Activated T-helper 1 cell treated with anti-CD3 and anti-CD28 coated beads, Interleukin-12 subunit alpha, Interleukin-12 subunit beta, Interleukin-2, Interleukin-4 antibody, amounts not matched to agents 30 ng/mL and 10 ng/mL and 1 ng/mL, durations not matched to agents 14 hours and 24 hours and 36 hours (primary cell): ENCODE measurements at regions of chr6 and their contacts with region 1.

Region 1: DNA sequence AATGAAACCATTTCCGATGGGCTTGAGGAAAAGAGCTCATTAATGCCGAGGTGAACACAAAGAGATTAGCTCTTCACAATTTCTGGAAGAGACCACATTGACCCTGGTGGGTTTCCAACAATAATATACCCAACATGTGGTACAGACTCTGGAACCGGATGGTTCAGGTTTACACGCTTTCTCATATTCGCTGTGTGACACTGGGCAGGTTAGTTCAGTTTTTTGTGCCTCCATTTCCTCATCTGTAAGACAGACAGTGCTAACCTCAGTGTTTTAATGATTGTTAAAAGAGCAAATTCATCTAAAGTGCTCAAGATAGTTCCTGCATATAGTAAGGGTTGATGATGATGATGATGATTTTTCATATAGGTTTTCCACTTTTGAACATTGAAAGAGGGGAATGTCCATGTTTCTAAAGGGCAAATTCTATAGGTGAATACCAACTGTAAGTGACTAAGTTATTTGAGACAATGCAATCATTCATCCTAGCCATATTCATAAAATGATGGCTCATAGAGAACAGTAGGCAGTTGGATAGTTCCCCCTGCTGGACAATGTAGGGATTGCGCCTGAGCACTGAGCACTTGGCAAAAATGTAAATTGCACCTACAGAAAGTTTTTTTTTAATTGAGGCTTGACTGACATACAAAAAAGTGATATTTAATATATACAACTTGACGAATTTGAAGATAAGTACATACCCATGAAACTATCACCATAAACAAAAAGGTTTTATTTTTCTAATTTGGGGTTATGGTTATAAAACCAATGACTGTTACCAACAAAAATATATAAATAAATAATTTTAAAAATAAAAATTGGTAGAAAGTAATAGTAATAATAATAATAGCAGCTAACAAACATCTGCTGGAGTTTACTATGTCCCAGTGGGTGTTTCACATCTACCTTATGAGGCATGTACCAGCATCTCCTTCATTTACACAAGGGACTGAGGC is 2.1 kb upstream of the PERP start:
- DNase-seq: peak; percentile 67
- H3K4me3 Mint-ChIP-seq: peak overlapping the region; percentile 62
- H3K27ac Mint-ChIP-seq: no peak overlapping the region
- H3K4me1 Mint-ChIP-seq: peaks cover 29% of the 10 kb centered on the region
- H3K27me3 Mint-ChIP-seq: peaks cover 28% of the 10 kb centered on the region

Region 2: DNA sequence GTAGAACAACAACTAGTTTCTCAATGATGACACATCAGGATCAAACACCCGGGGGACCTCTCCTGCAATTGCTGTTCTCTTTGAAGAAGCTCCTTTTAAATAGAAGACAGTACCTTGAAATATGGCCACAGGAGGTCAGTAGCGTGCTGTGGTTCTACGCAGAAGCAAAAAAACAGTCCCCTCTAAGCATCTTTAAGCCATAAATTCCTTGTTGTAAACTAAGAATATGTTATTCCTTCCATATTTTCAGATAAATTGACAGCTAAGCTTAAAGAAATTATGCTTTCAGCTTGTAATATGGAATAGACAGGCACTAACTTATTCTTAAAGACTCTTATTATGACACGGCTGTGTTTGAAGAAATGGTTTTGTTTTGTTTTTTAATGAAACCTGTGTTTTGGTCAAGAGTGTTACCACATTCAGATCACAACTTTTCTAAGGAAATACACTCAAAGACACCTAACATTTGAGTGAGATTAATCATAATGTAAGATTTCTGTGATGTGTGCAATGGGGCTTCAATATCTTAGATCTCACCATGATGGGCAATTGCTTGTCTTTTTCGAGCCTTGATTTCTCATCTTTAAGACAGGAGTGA is 1014.8 kb before region 1 on chr6:
- intact Hi-C with region 1: loop called (anchors 2 kb)
- DNase-seq: peak; percentile 38
- H3K4me3 Mint-ChIP-seq: no peak overlapping the region
- H3K27ac Mint-ChIP-seq: no peak overlapping the region
- H3K4me1 Mint-ChIP-seq: peaks cover 57% of the 10 kb centered on the region
- H3K27me3 Mint-ChIP-seq: no peaks in the 10 kb centered on the region

Region 3: GRCh38 chr6:137313928-137314855 is 795.1 kb before region 1 on chr6:
- intact Hi-C with region 1: loop called (anchors 10 kb)
- DNase-seq: peak; percentile 32
- H3K4me3 Mint-ChIP-seq: no peak overlapping the region
- H3K27ac Mint-ChIP-seq: no peak overlapping the region
- H3K4me1 Mint-ChIP-seq: peaks cover 9% of the 10 kb centered on the region
- H3K27me3 Mint-ChIP-seq: peaks cover 15% of the 10 kb centered on the region

Region 4: GRCh38 chr6:137641474-137642077 is 467.7 kb before region 1 on chr6:
- intact Hi-C with region 1: loop called (anchors 1 kb)
- DNase-seq: peak; percentile 49
- H3K4me3 Mint-ChIP-seq: no peak overlapping the region
- H3K27ac Mint-ChIP-seq: no peak overlapping the region
- H3K4me1 Mint-ChIP-seq: peaks cover 21% of the 10 kb centered on the region
- H3K27me3 Mint-ChIP-seq: peaks cover 3% of the 10 kb centered on the region

Region 5: DNA sequence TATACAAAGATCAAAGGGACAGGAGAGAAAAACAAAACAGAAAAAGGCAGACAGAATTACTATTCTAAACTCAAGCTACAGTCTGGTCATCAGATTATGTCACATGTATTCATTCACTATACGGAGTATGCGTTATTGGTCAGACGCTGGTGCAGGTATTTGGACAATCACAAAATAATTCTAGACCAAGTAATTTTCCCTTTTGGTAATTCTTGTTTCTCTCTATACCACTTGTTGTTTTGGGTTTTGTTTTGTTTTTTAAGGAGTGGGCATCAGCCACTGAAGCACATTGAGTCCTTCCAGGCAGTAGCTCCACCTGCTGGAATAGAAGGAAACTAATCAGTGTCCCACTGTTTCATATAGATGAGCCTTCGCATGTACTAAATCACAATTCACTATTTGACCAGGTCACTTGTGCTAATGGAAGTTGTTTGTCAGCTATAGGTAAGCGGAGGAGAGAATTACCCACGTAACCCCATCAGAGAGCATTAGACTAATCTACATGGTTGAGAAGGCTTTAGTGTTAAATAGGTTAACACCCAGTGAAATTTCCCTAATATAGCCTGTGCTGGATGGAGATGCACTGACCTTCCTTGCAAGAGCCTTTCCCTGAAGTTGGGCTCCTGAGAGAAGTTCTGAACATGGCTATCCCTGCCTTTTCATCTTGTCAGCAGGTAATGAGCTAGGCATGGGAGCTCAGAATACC is 164.4 kb before region 1 on chr6:
- intact Hi-C with region 1: loop called (anchors 5 kb)
- DNase-seq: no peak
- H3K4me3 Mint-ChIP-seq: no peak overlapping the region
- H3K27ac Mint-ChIP-seq: peak overlapping the region; percentile 15
- H3K4me1 Mint-ChIP-seq: peaks cover 86% of the 10 kb centered on the region
- H3K27me3 Mint-ChIP-seq: no peaks in the 10 kb centered on the region

Region 6: DNA sequence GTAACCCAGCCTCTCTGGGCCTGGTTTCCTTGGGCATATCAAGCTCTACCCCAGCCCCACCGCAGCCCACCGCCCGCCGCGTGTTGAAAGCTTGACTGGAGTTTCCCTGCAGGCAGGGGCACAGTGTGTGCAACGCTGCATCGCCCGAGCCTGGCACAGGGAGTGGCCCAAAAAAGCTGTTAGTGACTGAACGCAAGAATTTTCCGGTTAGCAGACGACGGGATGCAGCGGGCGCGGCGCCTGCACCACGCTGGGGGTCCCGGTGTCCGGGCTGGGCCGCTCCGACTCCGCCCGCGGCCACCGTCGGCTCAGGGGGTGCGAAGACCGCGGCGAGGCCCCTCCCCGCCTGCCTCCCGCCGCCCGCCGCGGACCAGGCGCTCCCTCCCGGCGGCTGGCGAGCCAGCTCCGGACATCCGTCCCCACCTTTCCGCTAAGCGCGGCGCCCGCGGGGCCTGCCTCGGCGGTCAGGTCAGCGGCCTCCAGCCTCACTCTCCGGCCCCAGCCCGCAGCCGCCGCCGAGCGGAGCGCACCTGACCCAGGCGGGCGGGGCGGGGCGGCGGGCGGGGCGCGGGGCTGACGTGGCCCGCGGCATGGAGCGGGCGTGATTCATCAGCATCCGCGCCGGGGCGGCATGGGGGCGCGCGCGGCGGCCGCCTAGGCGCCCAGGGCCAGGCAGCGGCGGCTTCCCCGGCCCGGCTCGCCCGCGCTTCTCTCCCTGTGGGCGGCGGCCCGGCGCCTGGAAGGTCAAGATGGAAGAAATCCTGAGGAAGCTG is 52.2 kb after region 1 on chr6 and contains the start of gene ARFGEF3:
- intact Hi-C with region 1: loop called (anchors 5 kb)
- DNase-seq: peak; percentile 29
- H3K4me3 Mint-ChIP-seq: peak within 1 kb of the TSS; percentile 63
- H3K27ac Mint-ChIP-seq: no peak within 1 kb of the TSS
- H3K4me1 Mint-ChIP-seq: peaks cover 13% of the 10 kb centered on the region
- H3K27me3 Mint-ChIP-seq: peaks cover 54% of the 10 kb centered on the region
- total RNA-seq, gene ARFGEF3: 0.22 and 0.29 TPM in 2 replicates

Region 7: DNA sequence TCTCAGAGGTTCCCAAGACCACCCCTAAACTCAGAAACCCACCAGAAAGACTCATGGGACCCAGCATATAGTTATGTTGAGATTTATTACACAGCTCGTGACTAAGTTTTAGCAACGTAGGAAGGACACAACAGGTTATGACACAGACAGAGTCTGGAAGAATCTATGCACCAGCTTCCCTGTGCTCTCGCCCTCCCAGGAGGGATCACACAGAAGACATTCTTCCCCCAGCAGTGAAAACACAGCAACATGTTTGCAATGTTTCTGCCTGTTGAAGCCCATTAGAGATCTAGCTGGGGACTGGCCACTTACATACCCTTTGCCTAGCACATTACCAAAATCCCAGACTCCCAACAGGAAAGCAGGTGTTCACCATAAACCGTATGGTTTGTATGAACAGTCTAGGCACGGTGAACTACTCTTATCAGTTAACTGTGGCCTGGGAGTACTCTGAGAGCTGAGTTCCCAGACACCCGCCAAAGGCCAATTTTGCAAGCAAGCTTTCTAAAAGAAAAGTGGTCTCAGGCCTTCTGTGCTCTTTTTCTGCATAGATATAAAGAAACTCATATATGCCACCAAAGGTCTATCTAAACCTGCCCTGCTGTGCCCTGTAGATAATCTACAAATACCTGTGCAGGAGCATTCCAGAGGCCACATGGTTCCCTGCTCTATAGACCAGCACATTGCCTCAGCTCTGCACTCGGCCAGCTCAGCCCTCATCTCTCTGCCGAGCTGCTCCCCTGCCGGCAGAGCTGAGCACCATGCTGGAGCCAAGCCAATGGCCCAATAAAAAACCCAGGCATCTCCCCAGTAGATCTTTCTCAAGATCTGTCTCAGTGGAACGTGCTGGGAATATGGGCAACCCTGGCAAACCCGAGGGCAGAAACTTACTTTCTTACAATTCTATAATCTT is 198.8 kb after region 1 on chr6:
- intact Hi-C with region 1: no loop called
- DNase-seq: no peak
- H3K4me3 Mint-ChIP-seq: no peak overlapping the region
- H3K27ac Mint-ChIP-seq: no peak overlapping the region
- H3K4me1 Mint-ChIP-seq: no peaks in the 10 kb centered on the region
- H3K27me3 Mint-ChIP-seq: peaks cover 5% of the 10 kb centered on the region